Endothelial cell of umbilical vein (primary cell): ENCODE measurements at regions of chr6 and their contacts with region 1.

Region 1: GRCh38 chr6:14046476-14047068 is 71.0 kb upstream of the CD83 start:
- DNase-seq: peak; percentile 57
- H3K4me3 ChIP-seq: no peak overlapping the region
- H3K27ac ChIP-seq: no peak overlapping the region
- H3K4me1 ChIP-seq: no peaks in the 10 kb centered on the region
- H3K27me3 ChIP-seq: no peaks in the 10 kb centered on the region
- CTCF ChIP-seq: peak; percentile 63 to 79
- POLR2A ChIP-seq: no peak

Region 2: GRCh38 chr6:13795041-13795750 is 251.4 kb before region 1 on chr6:
- CTCF ChIA-PET with region 1: interaction called, 6 read pairs
- POLR2A ChIA-PET with region 1: no interaction called
- dilution Hi-C with region 1: no loop called
- intact Hi-C with region 1: loop called (anchors 1 kb)
- DNase-seq: peak; percentile 75
- H3K4me3 ChIP-seq: no peak overlapping the region
- H3K27ac ChIP-seq: peak overlapping the region; percentile 38
- H3K4me1 ChIP-seq: peaks cover 10% of the 10 kb centered on the region
- H3K27me3 ChIP-seq: no peaks in the 10 kb centered on the region
- CTCF ChIP-seq: peak; percentile 89 to 96
- POLR2A ChIP-seq: no peak

Region 3: DNA sequence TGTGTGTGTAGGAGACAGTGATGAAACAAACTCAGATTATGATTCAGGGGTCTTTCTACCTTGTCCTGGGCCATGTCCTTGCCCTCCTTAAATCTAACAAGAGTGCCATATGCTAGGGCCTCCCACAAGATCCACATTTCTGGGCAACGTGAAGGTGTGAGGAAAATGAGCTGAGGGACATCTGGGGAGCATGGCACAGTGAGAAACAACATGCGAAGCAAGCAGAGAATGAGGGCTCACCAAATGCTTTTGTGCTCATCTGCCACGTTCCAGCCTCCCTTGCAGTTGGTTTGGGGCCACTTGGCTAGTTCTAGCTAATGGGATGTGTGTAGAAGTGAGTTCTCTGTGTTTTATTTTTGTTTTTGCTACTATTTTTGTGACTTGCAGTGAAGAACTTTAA is 143.2 kb before region 1 on chr6:
- CTCF ChIA-PET with region 1: interaction called, 203 read pairs
- POLR2A ChIA-PET with region 1: no interaction called
- dilution Hi-C with region 1: no loop called
- intact Hi-C with region 1: no loop called
- DNase-seq: no peak
- H3K4me3 ChIP-seq: no peak overlapping the region
- H3K27ac ChIP-seq: no peak overlapping the region
- H3K4me1 ChIP-seq: no peaks in the 10 kb centered on the region
- H3K27me3 ChIP-seq: peaks cover 3% of the 10 kb centered on the region in 2 experiments
- CTCF ChIP-seq: no peak
- POLR2A ChIP-seq: no peak

Region 4: DNA sequence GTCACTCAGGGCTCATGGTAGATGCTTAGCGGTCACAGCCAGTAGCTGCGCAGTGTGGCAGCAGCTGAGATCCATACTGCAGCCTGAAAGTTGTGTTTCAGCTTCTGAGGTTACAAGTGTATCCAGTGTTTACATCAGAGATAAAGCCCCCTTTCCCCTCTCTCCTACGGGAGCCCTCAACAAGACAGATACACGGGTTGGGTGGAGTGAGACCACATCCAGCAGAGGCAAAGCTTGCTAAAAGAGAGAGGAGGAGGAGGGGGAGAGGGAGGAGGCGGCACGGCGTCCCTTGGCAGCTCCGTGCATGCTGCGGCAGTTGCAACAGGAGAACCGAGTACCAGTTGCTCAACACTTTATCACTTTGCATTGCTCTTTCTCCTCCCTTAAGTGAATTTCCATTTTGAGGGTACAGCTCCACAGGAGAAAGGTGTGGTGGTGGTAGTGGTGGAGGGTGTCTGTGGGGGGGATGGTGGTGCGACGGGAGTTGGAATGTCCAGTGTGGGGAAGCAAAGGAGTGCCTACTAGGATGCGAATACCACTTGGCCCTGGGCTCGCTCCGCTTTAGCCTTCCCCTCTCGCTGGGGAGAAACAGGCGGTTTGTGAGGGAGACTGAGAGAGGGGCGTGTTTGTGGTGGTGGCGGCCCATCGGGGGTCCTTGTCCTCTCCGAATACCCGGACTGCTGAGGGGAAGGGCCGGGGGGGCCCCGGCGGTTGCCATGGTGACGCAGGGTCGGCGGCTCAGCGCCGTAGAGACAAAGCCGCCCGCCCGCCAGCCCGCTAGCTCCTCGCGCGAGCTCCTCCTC is 122.2 kb before region 1 on chr6:
- CTCF ChIA-PET with region 1: interaction called, 23 read pairs
- POLR2A ChIA-PET with region 1: interaction called, 3 read pairs
- dilution Hi-C with region 1: no loop called
- intact Hi-C with region 1: no loop called
- DNase-seq: peak; percentile 37
- H3K4me3 ChIP-seq: peak overlapping the region; percentile 43 to 55 (median 53)
- H3K27ac ChIP-seq: no peak overlapping the region
- H3K4me1 ChIP-seq: peaks cover 17% of the 10 kb centered on the region
- H3K27me3 ChIP-seq: peaks cover 29 to 52% of the 10 kb centered on the region in 2 experiments
- CTCF ChIP-seq: no peak
- POLR2A ChIP-seq: no peak

Region 5: GRCh38 chr6:14144678-14145113 is 98.1 kb after region 1 on chr6:
- CTCF ChIA-PET with region 1: interaction called, 6 read pairs
- POLR2A ChIA-PET with region 1: no interaction called
- dilution Hi-C with region 1: no loop called
- intact Hi-C with region 1: loop called (anchors 10 kb)
- DNase-seq: peak; percentile 68
- H3K4me3 ChIP-seq: no peak overlapping the region
- H3K27ac ChIP-seq: no peak overlapping the region
- H3K4me1 ChIP-seq: no peaks in the 10 kb centered on the region
- H3K27me3 ChIP-seq: no peaks in the 10 kb centered on the region
- CTCF ChIP-seq: peak; percentile 85 to 94
- POLR2A ChIP-seq: no peak